Naive thymus-derived CD8-positive, alpha-beta T cell (primary cell): ENCODE measurements at regions of chr19 and their contacts with region 1.

Region 1: DNA sequence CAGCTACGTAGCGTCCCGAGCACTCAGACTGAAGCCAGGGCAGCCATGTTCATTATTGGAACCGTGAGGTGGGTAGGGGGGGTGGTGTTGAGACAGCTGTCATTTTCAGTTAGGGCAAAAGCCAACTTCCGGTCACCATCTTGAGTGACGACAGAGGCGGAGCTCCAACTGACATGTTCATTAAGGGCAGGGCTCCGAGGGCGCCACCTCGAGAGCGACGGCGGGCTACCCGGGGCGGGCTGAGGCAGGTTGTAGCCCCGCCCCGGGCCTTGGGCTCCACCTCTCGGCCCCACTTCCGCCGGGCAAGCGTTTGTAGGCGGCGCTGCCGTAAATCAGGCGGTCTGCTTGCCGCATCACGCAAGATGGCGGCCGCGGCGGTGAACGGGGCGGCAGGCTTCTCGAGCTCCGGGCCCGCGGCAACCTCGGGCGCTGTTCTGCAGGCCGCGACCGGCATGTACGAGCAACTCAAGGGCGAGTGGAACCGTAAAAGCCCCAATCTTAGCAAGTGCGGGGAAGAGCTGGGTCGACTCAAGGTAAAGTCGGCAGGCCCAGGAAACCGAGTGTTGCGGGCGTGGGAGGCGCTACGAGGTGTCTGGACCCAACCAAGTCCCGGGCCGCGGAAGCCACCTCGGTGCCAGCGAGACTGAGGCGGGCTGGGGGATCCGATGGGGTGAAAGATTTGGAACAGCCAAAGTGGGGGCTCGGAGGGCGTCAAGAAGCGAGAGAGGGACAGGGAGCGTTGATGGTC is at the start of gene PSMD8:
- DNase-seq: peak; percentile 91 to 99 (median 98)
- ATAC-seq: peak; percentile 95 to 96
- H3K4me3 Mint-ChIP-seq: peak within 1 kb of the TSS; percentile 94 to 100 (median 99)
- H3K27ac Mint-ChIP-seq: peak within 1 kb of the TSS; percentile 93 to 100 (median 98)
- H3K4me1 Mint-ChIP-seq: peaks cover 21 to 36% (median 32%) of the 10 kb centered on the region in 4 donors
- H3K27me3 Mint-ChIP-seq: peaks cover 0 to 12% (median 7%) of the 10 kb centered on the region in 5 donors
- polyA plus RNA-seq, gene PSMD8: 137 to 139 (median 137) TPM

Region 2: GRCh38 chr19:37906869-37907734 is 467.5 kb before region 1 on chr19 and contains the start of gene SIPA1L3:
- POLR2A ChIA-PET with region 1: interaction called, 16 read pairs
- DNase-seq: peak; percentile 84 to 94 (median 88)
- ATAC-seq: peak; percentile 96 to 98
- H3K4me3 Mint-ChIP-seq: peak within 1 kb of the TSS; percentile 91 to 96 (median 95)
- H3K27ac Mint-ChIP-seq: peak within 1 kb of the TSS; percentile 51 to 97 (median 94)
- H3K4me1 Mint-ChIP-seq: peaks cover 15 to 51% (median 38%) of the 10 kb centered on the region in 4 donors
- H3K27me3 Mint-ChIP-seq: no peaks in the 10 kb centered on the region
- polyA plus RNA-seq, gene SIPA1L3: 0.66 to 1.6 (median 1.6) TPM

Region 3: DNA sequence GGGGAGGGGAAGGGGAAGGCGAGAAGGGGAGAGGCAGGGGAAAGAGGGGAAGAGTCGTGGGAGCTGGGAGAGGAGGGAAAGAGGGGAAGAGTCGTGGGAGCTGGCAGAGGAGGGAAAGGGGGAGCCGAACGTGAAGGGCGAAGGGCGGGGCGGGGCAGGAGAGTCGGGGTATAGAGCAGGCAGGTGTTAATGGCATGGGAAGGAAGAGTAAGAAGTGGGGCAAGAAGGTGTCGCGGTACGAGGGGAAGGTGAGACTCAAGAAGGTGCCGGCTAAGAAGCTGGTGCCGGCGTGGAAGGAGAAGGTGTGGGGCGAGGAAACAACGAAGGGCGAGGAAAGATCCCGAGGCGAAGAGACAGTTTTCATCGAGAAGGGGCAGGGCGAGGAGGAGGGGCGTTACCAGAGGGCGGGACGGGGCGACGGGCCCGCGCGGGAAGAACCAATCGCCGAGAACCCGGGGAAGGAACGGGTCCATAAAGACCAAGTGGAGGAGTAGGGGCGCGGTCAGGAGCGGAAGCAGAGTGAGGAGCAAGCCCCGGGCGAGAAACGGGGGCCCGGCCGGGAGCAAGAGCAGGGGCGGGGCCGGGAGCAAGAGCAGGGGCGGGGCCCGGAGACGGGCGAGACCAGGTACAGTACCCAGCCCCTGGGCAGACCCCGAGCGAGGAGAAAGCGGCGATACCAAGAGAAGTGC is 38.5 kb before region 1 on chr19:
- POLR2A ChIA-PET with region 1: interaction called, 56 read pairs
- DNase-seq: peak; percentile 85 to 95 (median 92)
- ATAC-seq: peak; percentile 69 to 75
- H3K4me3 Mint-ChIP-seq: peak overlapping the region; percentile 88 to 99 (median 94)
- H3K27ac Mint-ChIP-seq: peak overlapping the region; percentile 88 to 100 (median 98)
- H3K4me1 Mint-ChIP-seq: peaks cover 12 to 32% (median 22%) of the 10 kb centered on the region in 4 donors
- H3K27me3 Mint-ChIP-seq: no peaks in the 10 kb centered on the region

Region 4: DNA sequence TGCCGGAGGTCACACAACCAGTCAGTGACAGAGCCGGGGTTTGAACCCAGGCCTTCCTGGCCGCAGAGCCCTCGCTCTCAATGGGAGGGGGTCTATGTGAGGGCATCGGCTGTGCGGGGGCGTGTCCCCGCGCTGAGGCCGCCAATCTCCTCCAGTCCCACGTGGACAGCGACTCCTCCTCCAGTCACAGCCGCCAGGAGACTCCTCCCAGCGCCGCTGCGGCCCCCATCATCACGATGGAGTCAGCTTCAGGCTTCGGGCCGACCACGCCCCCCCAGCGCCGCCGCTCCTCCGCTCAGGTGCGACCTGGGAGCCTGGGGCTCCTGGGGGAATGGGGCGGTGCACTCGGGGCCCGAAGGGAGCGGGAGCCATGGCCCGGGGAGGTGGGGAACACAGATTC is 19.9 kb after region 1 on chr19:
- POLR2A ChIA-PET with region 1: interaction called, 48 read pairs
- DNase-seq: peak; percentile 35 to 85 (median 60)
- ATAC-seq: peak; percentile 69 to 73
- H3K4me3 Mint-ChIP-seq: peak overlapping the region; percentile 56 to 86 (median 77)
- H3K27ac Mint-ChIP-seq: peak overlapping the region in 6 of 10 donors; percentile 69 to 88 (median 85)
- H3K4me1 Mint-ChIP-seq: peaks cover 11 to 24% (median 20%) of the 10 kb centered on the region in 4 donors
- H3K27me3 Mint-ChIP-seq: peaks cover 0 to 26% (median 5%) of the 10 kb centered on the region in 5 donors

Region 5: GRCh38 chr19:38618590-38619360 is 244.2 kb after region 1 on chr19 and contains the start of gene EIF3K:
- POLR2A ChIA-PET with region 1: interaction called, 11 read pairs
- DNase-seq: peak; percentile 92 to 98 (median 96)
- ATAC-seq: peak; percentile 67 to 69
- H3K4me3 Mint-ChIP-seq: peak within 1 kb of the TSS; percentile 97 to 100 (median 99)
- H3K27ac Mint-ChIP-seq: peak within 1 kb of the TSS; percentile 97 to 100 (median 99)
- H3K4me1 Mint-ChIP-seq: peaks cover 33 to 60% (median 48%) of the 10 kb centered on the region in 4 donors
- H3K27me3 Mint-ChIP-seq: no peaks in the 10 kb centered on the region
- polyA plus RNA-seq, gene EIF3K: 400 to 435 (median 432) TPM